Aorta (tissue), 5 donors: ENCODE measurements at regions of chr1 and their contacts with region 1.

Region 1: GRCh38 chr1:159924981-159925712 is at the start of gene TAGLN2:
- DNase-seq: peak; percentile 96 to 98
- ATAC-seq: peak; percentile 88
- H3K4me3 ChIP-seq: peak within 1 kb of the TSS; percentile 66 to 86
- H3K27ac ChIP-seq: peak within 1 kb of the TSS; percentile 88 to 95
- H3K4me1 ChIP-seq: no peaks in the 10 kb centered on the region
- H3K27me3 ChIP-seq: no peaks in the 10 kb centered on the region
- total RNA-seq, gene TAGLN2: 316 to 350 TPM

Region 2: GRCh38 chr1:159771127-159771900 is 153.8 kb before region 1 on chr1:
- intact Hi-C with region 1: no loop called
- DNase-seq: no peak
- ATAC-seq: no peak
- H3K4me3 ChIP-seq: no peak overlapping the region
- H3K27ac ChIP-seq: no peak overlapping the region
- H3K4me1 ChIP-seq: no peaks in the 10 kb centered on the region
- H3K27me3 ChIP-seq: peaks cover 0 to 5% of the 10 kb centered on the region in 2 donors

Region 3: GRCh38 chr1:159854693-159855192 is 70.4 kb before region 1 on chr1:
- intact Hi-C with region 1: loop called in 1 of 2 experiments (anchors 2 kb)
- DNase-seq: peak; percentile 93
- ATAC-seq: peak; percentile 95
- H3K4me3 ChIP-seq: peak overlapping the region; percentile 38 to 87
- H3K27ac ChIP-seq: peak overlapping the region; percentile 16 to 61
- H3K4me1 ChIP-seq: no peaks in the 10 kb centered on the region
- H3K27me3 ChIP-seq: no peaks in the 10 kb centered on the region

Region 4: GRCh38 chr1:159889202-159889601 is 35.9 kb before region 1 on chr1:
- intact Hi-C with region 1: no loop called
- DNase-seq: no peak
- ATAC-seq: no peak
- H3K4me3 ChIP-seq: no peak overlapping the region
- H3K27ac ChIP-seq: no peak overlapping the region
- H3K4me1 ChIP-seq: no peaks in the 10 kb centered on the region
- H3K27me3 ChIP-seq: no peaks in the 10 kb centered on the region

Region 5: DNA sequence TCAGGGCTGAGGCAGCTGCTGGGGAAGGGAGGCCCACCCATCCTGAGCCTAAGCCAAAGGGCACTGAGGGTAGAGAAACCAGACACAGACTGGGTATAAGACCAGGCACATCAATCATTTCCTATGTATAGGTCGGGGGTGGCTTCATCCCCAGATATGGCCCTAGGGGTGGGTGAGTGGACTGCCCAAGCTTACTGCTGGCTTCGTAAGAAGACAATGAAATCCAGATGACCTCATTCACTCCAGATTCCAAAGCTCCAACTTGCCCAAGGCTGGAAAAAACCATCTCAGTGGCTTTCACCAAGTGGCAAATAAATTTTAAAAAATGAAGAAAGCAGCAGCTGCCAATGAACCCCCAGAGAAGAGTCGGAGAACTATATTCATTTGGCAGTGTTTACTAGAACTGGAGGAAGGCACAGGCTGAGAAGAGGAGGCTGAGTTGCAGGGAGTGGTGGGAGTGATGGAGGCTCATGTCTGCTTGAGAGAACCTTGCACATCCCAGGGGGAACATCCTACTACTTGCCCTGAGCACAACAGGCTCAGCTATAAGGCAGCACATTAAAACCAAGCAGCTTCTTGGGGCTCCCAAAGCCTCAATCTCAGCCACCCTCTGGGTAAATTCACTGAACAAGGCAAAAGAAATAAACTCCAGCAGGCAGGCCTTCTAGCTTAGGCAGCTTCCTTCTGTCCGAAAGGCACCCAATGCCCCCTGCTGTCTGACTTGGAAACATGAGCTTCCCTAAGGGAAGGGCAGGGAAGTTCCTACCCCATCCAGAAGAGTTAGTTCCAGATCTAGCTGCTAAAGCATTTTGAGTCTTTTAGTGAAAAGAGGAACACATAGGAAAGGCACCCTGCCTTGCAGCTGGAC is 294.1 kb after region 1 on chr1:
- intact Hi-C with region 1: loop called in 1 of 2 experiments (anchors 10 kb)
- DNase-seq: peak in 1 of 2 donors; percentile 67
- ATAC-seq: peak; percentile 80
- H3K4me3 ChIP-seq: no peak overlapping the region
- H3K27ac ChIP-seq: peak overlapping the region in 1 of 2 donors; percentile 73
- H3K4me1 ChIP-seq: peaks cover 0 to 3% of the 10 kb centered on the region in 2 donors
- H3K27me3 ChIP-seq: no peaks in the 10 kb centered on the region